ENCODE measurements at regions of chr5 and their contacts with region 1.

Region 1: GRCh38 chr5:43066799-43067741 is 27.0 kb upstream of the ANXA2R start:
- ATAC-seq: peak; percentile 34 to 60 (median 49)
- H3K4me3 ChIP-seq: peak overlapping the region; percentile 71 to 95 (median 83)
- H3K27ac ChIP-seq: peak overlapping the region; percentile 78 to 92
- H3K4me1 ChIP-seq: peaks cover 22 to 23% of the 10 kb centered on the region in 2 donors

Region 2: DNA sequence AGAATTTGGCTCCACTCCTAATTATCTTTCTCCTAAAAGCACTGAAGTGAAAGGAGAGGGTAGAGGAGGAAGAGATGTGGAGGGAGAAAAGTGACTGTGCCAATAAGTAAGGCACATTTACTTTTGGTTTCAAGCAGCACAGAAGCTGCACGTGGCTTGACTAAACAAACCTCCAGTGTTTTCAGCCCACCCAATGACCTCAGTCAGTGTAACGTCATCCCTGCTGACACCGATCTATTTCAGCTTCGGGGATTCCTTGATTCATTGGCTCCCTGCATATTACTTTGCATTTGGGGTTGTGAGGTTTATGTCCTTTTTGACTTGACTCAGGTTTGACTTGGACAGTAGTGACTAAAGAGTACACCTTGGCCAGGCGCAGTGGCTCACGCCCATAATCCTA is 89.3 kb after region 1 on chr5:
- in situ Hi-C with region 1: loop called in 1 of 9 experiments (anchors 25 kb)
- ATAC-seq: peak in 2 of 8 experiments; percentile 20 to 55
- H3K4me3 ChIP-seq: no peak overlapping the region
- H3K27ac ChIP-seq: no peak overlapping the region
- H3K4me1 ChIP-seq: no peaks in the 10 kb centered on the region

Measured in motor neuron (in vitro differentiated cells).